T-cell (primary cell): ENCODE measurements at regions of chr7 and their contacts with region 1.

Region 1: DNA sequence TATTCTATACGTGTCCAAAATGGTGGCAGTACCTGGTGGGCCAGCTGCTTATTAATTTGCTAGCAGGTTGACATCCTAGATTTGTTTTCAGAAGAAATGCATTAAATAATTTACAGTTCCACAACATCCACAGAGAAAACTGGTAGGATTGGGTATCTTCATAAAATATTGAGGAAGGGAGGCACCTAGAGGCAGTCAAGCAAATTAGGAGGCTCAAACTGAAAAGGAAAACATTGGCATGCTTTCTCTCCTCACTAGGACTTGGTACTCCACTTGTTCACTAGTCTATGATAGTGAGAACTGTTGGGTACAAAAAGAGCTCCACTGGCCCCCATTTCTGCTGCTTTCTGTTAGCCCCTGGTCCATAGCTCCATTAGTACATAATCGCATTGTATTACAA is 18.3 kb upstream of the LRGUK start:
- DNase-seq: no peak
- ATAC-seq: no peak
- H3K4me3 ChIP-seq: no peak overlapping the region
- H3K4me3 Mint-ChIP-seq: no peak overlapping the region
- H3K27ac ChIP-seq: no peak overlapping the region
- H3K27ac Mint-ChIP-seq: no peak overlapping the region
- H3K4me1 ChIP-seq: no peaks in the 10 kb centered on the region
- H3K4me1 Mint-ChIP-seq: no peaks in the 10 kb centered on the region
- H3K27me3 ChIP-seq: no peaks in the 10 kb centered on the region
- H3K27me3 Mint-ChIP-seq: peaks cover 0 to 3% of the 10 kb centered on the region in 2 donors

Region 2: GRCh38 chr7:133081599-133082389 is 1027.0 kb before region 1 on chr7 and contains the start of gene CHCHD3:
- CTCF ChIA-PET with region 1: no interaction called
- POLR2A ChIA-PET with region 1: no interaction called
- DNase-seq: peak; percentile 88 to 98 (median 96)
- ATAC-seq: peak; percentile 99 to 100 (median 100)
- H3K4me3 ChIP-seq: peak within 1 kb of the TSS; percentile 94 to 96
- H3K4me3 Mint-ChIP-seq: peak within 1 kb of the TSS; percentile 90 to 93 (median 91)
- H3K27ac ChIP-seq: peak within 1 kb of the TSS; percentile 89
- H3K27ac Mint-ChIP-seq: peak within 1 kb of the TSS; percentile 87 to 94
- H3K4me1 ChIP-seq: peaks cover 7 to 16% of the 10 kb centered on the region in 2 experiments
- H3K4me1 Mint-ChIP-seq: peaks cover 33 to 37% (median 34%) of the 10 kb centered on the region in 3 donors
- H3K27me3 ChIP-seq: no peaks in the 10 kb centered on the region
- H3K27me3 Mint-ChIP-seq: peaks cover 0 to 1% of the 10 kb centered on the region in 2 donors
- total RNA-seq, gene CHCHD3: 25.6 to 33.7 (median 30.3) TPM

Region 3: GRCh38 chr7:133652547-133652946 is 456.3 kb before region 1 on chr7:
- CTCF ChIA-PET with region 1: interaction called in 1 of 2 experiments, 11 read pairs
- POLR2A ChIA-PET with region 1: no interaction called
- DNase-seq: no peak
- ATAC-seq: no peak
- H3K4me3 ChIP-seq: no peak overlapping the region
- H3K4me3 Mint-ChIP-seq: no peak overlapping the region
- H3K27ac ChIP-seq: no peak overlapping the region
- H3K27ac Mint-ChIP-seq: no peak overlapping the region
- H3K4me1 ChIP-seq: no peaks in the 10 kb centered on the region
- H3K4me1 Mint-ChIP-seq: peaks cover 0 to 5% (median 0%) of the 10 kb centered on the region in 3 donors
- H3K27me3 ChIP-seq: no peaks in the 10 kb centered on the region
- H3K27me3 Mint-ChIP-seq: no peaks in the 10 kb centered on the region

Region 4: DNA sequence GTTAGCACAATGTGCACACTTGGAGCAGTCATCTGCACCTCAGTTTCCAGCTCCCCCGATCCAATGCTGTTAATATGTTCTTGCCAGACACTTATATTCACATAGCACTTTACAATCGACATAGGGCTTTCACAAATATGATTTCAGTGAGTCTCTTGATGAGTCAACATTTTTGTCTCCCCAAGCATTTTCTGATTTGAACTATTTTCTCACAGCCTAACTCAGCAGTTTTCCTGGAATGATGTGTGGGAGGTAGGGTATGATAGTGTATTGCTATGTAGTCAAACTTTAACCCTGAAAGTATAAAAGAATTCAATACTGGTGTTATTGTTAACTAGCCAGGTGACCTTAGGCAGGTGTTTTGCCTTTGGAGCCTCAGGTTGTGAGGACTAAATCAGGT is 64.1 kb before region 1 on chr7:
- CTCF ChIA-PET with region 1: no interaction called
- POLR2A ChIA-PET with region 1: no interaction called
- DNase-seq: no peak
- ATAC-seq: no peak
- H3K4me3 ChIP-seq: no peak overlapping the region
- H3K4me3 Mint-ChIP-seq: no peak overlapping the region
- H3K27ac ChIP-seq: no peak overlapping the region
- H3K27ac Mint-ChIP-seq: no peak overlapping the region
- H3K4me1 ChIP-seq: no peaks in the 10 kb centered on the region
- H3K4me1 Mint-ChIP-seq: peaks cover 0 to 5% (median 0%) of the 10 kb centered on the region in 3 donors
- H3K27me3 ChIP-seq: no peaks in the 10 kb centered on the region
- H3K27me3 Mint-ChIP-seq: no peaks in the 10 kb centered on the region